Activated B cell treated with CpG ODN at 0.5 μM for 24 hours (primary cell): ENCODE measurements at regions of chr19 and their contacts with region 1.

Region 1: GRCh38 chr19:15836595-15837337 is 21.3 kb upstream of the OR10H1 start:
- DNase-seq: peak; percentile 85
- ATAC-seq: peak; percentile 95
- H3K4me3 Mint-ChIP-seq: peak overlapping the region; percentile 92
- H3K27ac Mint-ChIP-seq: peak overlapping the region; percentile 95
- H3K4me1 Mint-ChIP-seq: peaks cover 15% of the 10 kb centered on the region
- H3K27me3 Mint-ChIP-seq: peaks cover 4% of the 10 kb centered on the region
- CTCF ChIP-seq: no peak

Region 2: GRCh38 chr19:16001481-16002312 is 164.9 kb after region 1 on chr19:
- CTCF ChIA-PET with region 1: no interaction called
- POLR2A ChIA-PET with region 1: interaction called, 12 read pairs
- intact Hi-C with region 1: no loop called
- DNase-seq: no peak
- ATAC-seq: peak; percentile 90
- H3K4me3 Mint-ChIP-seq: peak overlapping the region; percentile 81
- H3K27ac Mint-ChIP-seq: peak overlapping the region; percentile 79
- H3K4me1 Mint-ChIP-seq: peaks cover 18% of the 10 kb centered on the region
- H3K27me3 Mint-ChIP-seq: no peaks in the 10 kb centered on the region
- CTCF ChIP-seq: no peak